Pancreas (tissue), 10 donors: ENCODE measurements at regions of chr19 and their contacts with region 1.

Region 1: DNA sequence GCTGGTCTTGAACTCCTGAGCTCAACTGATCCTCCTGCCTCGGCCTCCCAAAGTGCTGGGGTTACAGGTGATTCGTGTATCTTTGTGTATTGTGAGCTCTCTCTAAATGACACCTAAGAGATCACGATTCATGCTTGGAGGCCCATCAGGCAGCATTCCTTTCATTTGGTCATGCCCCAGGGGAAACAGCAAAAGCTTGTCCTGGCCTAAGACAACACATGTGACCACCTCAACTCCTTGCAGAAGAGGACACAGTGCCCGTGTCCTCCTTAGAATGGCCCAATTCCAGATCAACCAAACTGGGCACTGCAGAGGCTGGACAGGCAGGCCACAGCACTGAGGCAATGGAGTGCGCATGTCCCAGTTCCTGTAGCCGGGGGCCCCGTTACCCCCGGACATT is 32.5 kb downstream of the ZC3H4 start:
- DNase-seq: no peak
- ATAC-seq: no peak
- H3K4me3 ChIP-seq: no peak overlapping the region
- H3K27ac ChIP-seq: no peak overlapping the region
- H3K4me1 ChIP-seq: no peaks in the 10 kb centered on the region
- H3K27me3 ChIP-seq: no peaks in the 10 kb centered on the region
- CTCF ChIP-seq: no peak

Region 2: DNA sequence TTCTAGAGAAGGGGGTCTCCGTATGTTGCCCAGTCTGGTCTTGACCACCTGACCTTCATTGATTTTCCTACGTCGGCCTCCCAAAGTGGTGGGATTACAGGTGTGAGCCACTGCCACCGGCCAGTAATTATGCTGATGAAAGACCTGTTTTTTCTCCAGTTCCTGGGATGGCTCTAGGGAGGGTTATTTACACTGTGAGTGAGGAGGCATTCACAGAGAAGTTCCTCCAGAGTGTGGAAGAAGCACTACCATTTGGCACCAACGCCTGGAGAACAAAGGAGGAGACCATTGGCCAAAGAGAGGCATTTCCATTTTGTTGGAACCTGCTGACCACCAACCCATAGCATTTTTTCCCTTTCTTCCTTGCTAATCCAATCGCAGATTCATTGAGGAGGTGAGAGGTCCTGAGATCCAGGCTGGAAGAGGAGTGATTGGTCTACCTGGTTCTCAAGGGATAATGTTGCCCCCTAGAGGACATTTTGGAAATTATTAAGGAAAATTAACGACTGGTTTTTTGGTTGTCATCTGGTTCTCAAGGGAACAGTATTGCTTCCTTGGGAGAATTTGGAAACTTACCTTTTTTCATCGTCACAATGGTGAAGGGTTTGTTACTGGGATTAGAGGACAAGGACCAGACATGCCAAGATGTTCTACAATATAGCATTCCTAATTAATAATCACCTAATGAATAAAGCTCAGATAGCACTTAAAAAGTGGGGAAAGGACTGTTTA is 44.0 kb after region 1 on chr19:
- intact Hi-C with region 1: loop called in 2 of 3 experiments (anchors 2 to 5 kb)
- DNase-seq: no peak
- ATAC-seq: peak; percentile 85 to 96 (median 91)
- H3K4me3 ChIP-seq: no peak overlapping the region
- H3K27ac ChIP-seq: no peak overlapping the region
- H3K4me1 ChIP-seq: no peaks in the 10 kb centered on the region
- H3K27me3 ChIP-seq: no peaks in the 10 kb centered on the region
- CTCF ChIP-seq: peak; percentile 48 to 63 (median 55)